T-cell (primary cell): ENCODE measurements at regions of chr3 and their contacts with region 1.

Region 1: GRCh38 chr3:58617338-58617761 is 40.2 kb upstream of the FAM107A start:
- DNase-seq: no peak
- ATAC-seq: no peak
- H3K4me3 ChIP-seq: no peak overlapping the region
- H3K4me3 Mint-ChIP-seq: no peak overlapping the region
- H3K27ac ChIP-seq: no peak overlapping the region
- H3K27ac Mint-ChIP-seq: no peak overlapping the region
- H3K4me1 ChIP-seq: no peaks in the 10 kb centered on the region
- H3K4me1 Mint-ChIP-seq: no peaks in the 10 kb centered on the region
- H3K27me3 ChIP-seq: peaks cover 0 to 6% of the 10 kb centered on the region in 2 experiments
- H3K27me3 Mint-ChIP-seq: no peaks in the 10 kb centered on the region

Region 2: DNA sequence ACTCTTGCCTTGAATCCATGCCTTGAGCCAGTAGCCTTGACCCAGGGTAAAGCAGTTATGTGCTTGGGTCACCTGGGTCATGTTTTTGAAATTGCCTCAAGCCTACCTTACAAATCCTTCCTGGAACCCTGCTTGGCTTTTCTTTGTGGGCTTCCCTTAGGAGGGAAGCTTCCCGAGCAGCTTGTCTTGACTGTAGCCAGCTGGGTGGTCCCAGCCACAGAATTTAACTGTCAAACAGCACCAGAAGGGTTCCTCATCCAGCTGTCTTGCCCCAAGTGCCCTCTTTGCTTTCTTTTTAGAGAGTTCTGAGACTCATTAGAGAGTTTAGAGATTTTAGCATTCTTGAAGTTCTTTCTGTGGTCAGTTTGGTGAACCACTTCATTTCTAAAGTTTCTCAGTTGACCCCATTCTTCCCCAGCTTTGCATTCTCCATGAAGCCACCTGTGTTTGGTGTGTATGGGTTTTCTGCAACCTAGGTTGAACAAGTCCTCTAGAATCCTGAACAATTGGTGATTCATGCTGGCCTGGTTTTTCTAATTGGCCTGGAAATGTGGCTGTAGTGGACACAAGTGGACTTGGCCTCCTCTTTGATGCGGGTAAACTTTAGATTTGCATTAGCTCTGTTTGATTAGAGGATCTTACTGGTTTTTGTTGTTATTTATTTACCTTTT is 575.6 kb before region 1 on chr3:
- CTCF ChIA-PET with region 1: no interaction called
- POLR2A ChIA-PET with region 1: no interaction called
- DNase-seq: no peak
- ATAC-seq: no peak
- H3K4me3 ChIP-seq: no peak overlapping the region
- H3K4me3 Mint-ChIP-seq: peak overlapping the region in 1 of 3 donors; percentile 7
- H3K27ac ChIP-seq: no peak overlapping the region
- H3K27ac Mint-ChIP-seq: peak overlapping the region in 1 of 2 donors; percentile 25
- H3K4me1 ChIP-seq: peaks cover 8 to 25% of the 10 kb centered on the region in 2 experiments
- H3K4me1 Mint-ChIP-seq: peaks cover 51 to 73% (median 63%) of the 10 kb centered on the region in 3 donors
- H3K27me3 ChIP-seq: no peaks in the 10 kb centered on the region
- H3K27me3 Mint-ChIP-seq: no peaks in the 10 kb centered on the region

Region 3: GRCh38 chr3:58471025-58471887 is 146.1 kb before region 1 on chr3:
- CTCF ChIA-PET with region 1: no interaction called
- POLR2A ChIA-PET with region 1: no interaction called
- DNase-seq: peak in 21 of 35 experiments; percentile 3 to 57 (median 24)
- ATAC-seq: peak; percentile 75 to 99 (median 93)
- H3K4me3 ChIP-seq: no peak overlapping the region
- H3K4me3 Mint-ChIP-seq: peak overlapping the region in 2 of 3 donors; percentile 25 to 37
- H3K27ac ChIP-seq: peak overlapping the region; percentile 27
- H3K27ac Mint-ChIP-seq: peak overlapping the region; percentile 89 to 93
- H3K4me1 ChIP-seq: peaks cover 0 to 27% of the 10 kb centered on the region in 2 experiments
- H3K4me1 Mint-ChIP-seq: peaks cover 20 to 42% (median 41%) of the 10 kb centered on the region in 3 donors
- H3K27me3 ChIP-seq: no peaks in the 10 kb centered on the region
- H3K27me3 Mint-ChIP-seq: no peaks in the 10 kb centered on the region

Region 4: DNA sequence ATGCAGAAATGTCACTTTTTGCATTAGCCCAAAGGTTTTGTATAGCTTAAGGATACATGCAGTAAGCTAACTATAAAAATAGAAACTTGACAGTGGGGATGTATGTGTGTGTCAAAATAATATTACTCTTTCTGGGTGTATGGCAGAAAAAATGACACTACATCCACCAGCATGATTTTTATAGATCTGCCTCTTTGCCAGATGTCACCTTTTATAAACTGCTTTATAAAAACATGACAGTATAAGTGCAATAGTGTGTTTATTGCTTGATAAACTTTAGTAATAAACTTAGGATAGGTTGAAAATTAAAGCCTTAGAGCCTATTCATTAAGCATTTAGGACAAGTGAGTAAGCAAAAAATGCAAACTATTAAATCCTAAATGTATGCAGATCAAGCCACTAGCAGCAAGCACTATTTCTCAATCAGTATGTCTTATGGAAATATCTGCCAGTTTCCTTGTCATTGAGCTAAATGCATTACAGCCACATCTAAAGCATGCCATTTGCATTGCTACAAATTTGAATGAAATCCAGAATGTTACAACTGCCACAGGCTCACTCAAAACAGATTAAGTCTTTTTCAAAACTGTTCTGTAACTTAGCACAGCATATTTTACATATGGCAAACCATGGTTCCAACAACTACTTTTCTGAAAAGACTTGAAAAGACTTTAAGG is 1698.9 kb after region 1 on chr3:
- CTCF ChIA-PET with region 1: interaction called in 1 of 2 experiments, 10 read pairs
- POLR2A ChIA-PET with region 1: no interaction called
- DNase-seq: no peak
- ATAC-seq: no peak
- H3K4me3 ChIP-seq: no peak overlapping the region
- H3K4me3 Mint-ChIP-seq: no peak overlapping the region
- H3K27ac ChIP-seq: no peak overlapping the region
- H3K27ac Mint-ChIP-seq: no peak overlapping the region
- H3K4me1 ChIP-seq: no peaks in the 10 kb centered on the region
- H3K4me1 Mint-ChIP-seq: peaks cover 2 to 14% (median 14%) of the 10 kb centered on the region in 3 donors
- H3K27me3 ChIP-seq: no peaks in the 10 kb centered on the region
- H3K27me3 Mint-ChIP-seq: no peaks in the 10 kb centered on the region